Testis (tissue), 5 donors: ENCODE measurements at regions of chrX and their contacts with region 1.

Region 1: DNA sequence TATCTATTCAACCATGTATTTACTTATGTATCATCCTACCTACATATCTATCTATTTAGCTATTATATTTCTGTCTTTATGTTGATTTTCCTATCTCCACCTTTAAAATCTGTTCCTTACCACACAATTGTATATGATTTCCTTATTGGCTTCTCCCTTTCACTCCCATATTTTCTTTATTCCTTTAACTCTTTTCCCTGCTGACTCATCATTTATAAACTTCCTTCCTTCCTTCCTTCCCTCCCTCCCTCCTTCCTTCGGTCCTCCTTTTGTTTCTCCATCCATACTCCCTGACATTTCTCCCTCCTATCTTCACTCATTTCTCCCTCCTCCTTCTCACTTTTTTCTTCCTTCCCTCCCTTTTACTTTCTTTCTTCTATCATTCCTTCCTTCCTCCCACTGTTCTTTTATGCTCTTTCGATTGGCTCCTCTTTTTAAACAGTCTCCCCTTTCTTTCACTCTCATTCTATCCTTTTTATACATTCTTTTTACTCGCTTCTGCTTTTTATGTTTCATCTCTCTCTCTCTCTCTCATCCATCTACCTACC is 100.3 kb downstream of the RBMX2 start:
- DNase-seq: no peak
- H3K4me3 ChIP-seq: no peak overlapping the region
- H3K27ac ChIP-seq: no peak overlapping the region
- H3K4me1 ChIP-seq: no peaks in the 10 kb centered on the region
- H3K27me3 ChIP-seq: no peaks in the 10 kb centered on the region
- CTCF ChIP-seq: no peak
- POLR2A ChIP-seq: no peak

Region 2: GRCh38 chrX:130347321-130347720 is 154.8 kb before region 1 on chrX:
- intact Hi-C with region 1: no loop called
- DNase-seq: no peak
- H3K4me3 ChIP-seq: no peak overlapping the region
- H3K27ac ChIP-seq: no peak overlapping the region
- H3K4me1 ChIP-seq: no peaks in the 10 kb centered on the region
- H3K27me3 ChIP-seq: no peaks in the 10 kb centered on the region
- CTCF ChIP-seq: no peak
- POLR2A ChIP-seq: no peak

Region 3: DNA sequence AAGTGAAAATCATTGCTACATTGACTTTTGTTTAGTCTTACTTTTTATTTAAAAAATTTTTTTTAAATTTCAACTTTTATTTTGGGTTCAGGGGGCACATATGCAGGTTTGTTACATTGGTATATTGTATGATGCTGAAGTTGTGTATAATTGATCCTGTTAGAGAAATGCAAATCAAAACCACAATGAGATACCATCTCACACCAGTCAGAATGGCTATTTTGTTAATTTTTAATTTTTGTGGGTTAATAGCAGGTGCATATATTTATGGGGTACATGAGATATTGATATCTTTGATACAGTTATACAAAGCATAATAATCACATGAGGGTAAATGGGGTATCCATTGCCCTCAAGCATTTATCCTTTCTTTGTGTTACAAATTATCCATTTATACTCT is 66.2 kb before region 1 on chrX:
- intact Hi-C with region 1: no loop called
- DNase-seq: no peak
- H3K4me3 ChIP-seq: no peak overlapping the region
- H3K27ac ChIP-seq: no peak overlapping the region
- H3K4me1 ChIP-seq: no peaks in the 10 kb centered on the region
- H3K27me3 ChIP-seq: no peaks in the 10 kb centered on the region
- CTCF ChIP-seq: no peak
- POLR2A ChIP-seq: no peak

Region 4: GRCh38 chrX:131322651-131323050 is 820.6 kb after region 1 on chrX:
- intact Hi-C with region 1: loop called (anchors 10 kb)
- DNase-seq: no peak
- H3K4me3 ChIP-seq: no peak overlapping the region
- H3K27ac ChIP-seq: no peak overlapping the region
- H3K4me1 ChIP-seq: no peaks in the 10 kb centered on the region
- H3K27me3 ChIP-seq: no peaks in the 10 kb centered on the region
- CTCF ChIP-seq: no peak
- POLR2A ChIP-seq: no peak